ENCODE measurements at regions of chr17 and their contacts with region 1.

Region 1: GRCh38 chr17:1122533-1123392 is 57.0 kb downstream of the ABR start:
- DNase-seq: peak; percentile 69 to 91 (median 83)
- ATAC-seq: peak; percentile 95
- H3K4me3 ChIP-seq: no peak overlapping the region
- H3K4me3 Mint-ChIP-seq: no peak overlapping the region
- H3K27ac ChIP-seq: no peak overlapping the region
- H3K27ac Mint-ChIP-seq: no peak overlapping the region
- H3K4me1 ChIP-seq: peaks cover 12% of the 10 kb centered on the region
- H3K4me1 Mint-ChIP-seq: peaks cover 7% of the 10 kb centered on the region
- H3K27me3 ChIP-seq: no peaks in the 10 kb centered on the region
- H3K27me3 Mint-ChIP-seq: no peaks in the 10 kb centered on the region
- CTCF ChIP-seq: peak; percentile 96

Region 2: GRCh38 chr17:1108861-1109605 is 13.7 kb before region 1 on chr17:
- CTCF ChIA-PET with region 1: interaction called, 18 read pairs
- POLR2A ChIA-PET with region 1: interaction called, 3 read pairs
- intact Hi-C with region 1: no loop called
- DNase-seq: peak; percentile 34 to 87 (median 69)
- ATAC-seq: peak; percentile 82
- H3K4me3 ChIP-seq: peak overlapping the region; percentile 68 to 70
- H3K4me3 Mint-ChIP-seq: peak overlapping the region; percentile 84
- H3K27ac ChIP-seq: peak overlapping the region; percentile 60 to 71
- H3K27ac Mint-ChIP-seq: peak overlapping the region; percentile 82
- H3K4me1 ChIP-seq: peaks cover 24% of the 10 kb centered on the region
- H3K4me1 Mint-ChIP-seq: peaks cover 26% of the 10 kb centered on the region
- H3K27me3 ChIP-seq: no peaks in the 10 kb centered on the region
- H3K27me3 Mint-ChIP-seq: no peaks in the 10 kb centered on the region
- CTCF ChIP-seq: no peak

Region 3: DNA sequence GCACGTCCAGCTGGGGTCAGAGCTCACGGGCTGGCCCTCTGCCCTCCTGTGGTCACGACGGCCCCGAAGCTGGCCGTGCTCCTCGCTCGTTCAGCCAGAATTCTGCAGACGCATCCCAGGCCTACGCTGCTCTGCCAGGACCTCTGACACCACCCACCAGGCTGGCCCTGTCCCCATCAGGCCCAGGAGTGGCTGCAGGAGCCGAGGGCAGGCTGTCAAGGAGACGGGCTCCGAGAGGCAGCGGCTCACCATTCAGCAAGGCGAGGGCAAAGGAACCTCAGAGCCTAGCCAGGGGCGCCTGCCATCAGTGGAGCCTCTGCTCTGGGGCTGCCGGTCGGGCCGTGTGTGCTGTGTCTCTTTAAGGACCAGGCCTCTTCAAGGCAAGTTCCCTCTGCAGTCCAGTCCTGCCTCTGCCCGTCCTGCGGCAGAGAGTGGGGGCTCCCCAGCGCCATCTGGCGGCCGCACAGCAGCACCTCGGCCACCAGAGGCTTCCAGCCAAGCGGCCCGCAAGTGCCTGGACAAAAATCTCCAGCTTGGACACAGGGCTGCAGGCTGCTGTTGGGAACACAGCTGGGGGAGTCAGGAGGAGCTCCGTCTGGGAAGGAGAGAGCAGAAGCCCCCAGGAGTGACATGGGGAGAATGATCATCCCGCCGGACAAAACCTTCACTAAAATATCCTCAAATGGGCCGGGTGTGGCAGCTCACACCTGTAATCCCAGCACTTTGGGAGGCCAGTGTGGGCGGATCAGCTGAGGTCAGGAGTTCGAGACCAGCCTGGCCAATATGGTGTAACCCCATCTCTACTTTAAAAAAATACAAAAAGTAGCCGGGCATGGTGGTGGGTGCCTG is 64.4 kb after region 1 on chr17:
- CTCF ChIA-PET with region 1: interaction called, 137 read pairs
- POLR2A ChIA-PET with region 1: no interaction called
- intact Hi-C with region 1: loop called in 1 of 2 experiments (anchors 1 kb)
- DNase-seq: peak; percentile 54 to 85 (median 71)
- ATAC-seq: peak; percentile 97
- H3K4me3 ChIP-seq: no peak overlapping the region
- H3K4me3 Mint-ChIP-seq: no peak overlapping the region
- H3K27ac ChIP-seq: no peak overlapping the region
- H3K27ac Mint-ChIP-seq: no peak overlapping the region
- H3K4me1 ChIP-seq: no peaks in the 10 kb centered on the region
- H3K4me1 Mint-ChIP-seq: peaks cover 9% of the 10 kb centered on the region
- H3K27me3 ChIP-seq: no peaks in the 10 kb centered on the region
- H3K27me3 Mint-ChIP-seq: no peaks in the 10 kb centered on the region
- CTCF ChIP-seq: peak; percentile 78

Region 4: GRCh38 chr17:1267471-1267947 is 144.7 kb after region 1 on chr17:
- CTCF ChIA-PET with region 1: interaction called, 5 read pairs
- POLR2A ChIA-PET with region 1: no interaction called
- intact Hi-C with region 1: loop called in 1 of 2 experiments (anchors 5 kb)
- DNase-seq: no peak
- ATAC-seq: no peak
- H3K4me3 ChIP-seq: peak overlapping the region; percentile 48 to 64
- H3K4me3 Mint-ChIP-seq: peak overlapping the region; percentile 74
- H3K27ac ChIP-seq: peak overlapping the region in 1 of 2 experiments; percentile 63
- H3K27ac Mint-ChIP-seq: no peak overlapping the region
- H3K4me1 ChIP-seq: peaks cover 7% of the 10 kb centered on the region
- H3K4me1 Mint-ChIP-seq: peaks cover 11% of the 10 kb centered on the region
- H3K27me3 ChIP-seq: peaks cover 7 to 11% of the 10 kb centered on the region in 2 experiments
- H3K27me3 Mint-ChIP-seq: peaks cover 10% of the 10 kb centered on the region
- CTCF ChIP-seq: no peak

Region 5: GRCh38 chr17:1331708-1332107 is 208.9 kb after region 1 on chr17:
- CTCF ChIA-PET with region 1: interaction called, 6 read pairs
- POLR2A ChIA-PET with region 1: interaction called, 4 read pairs
- intact Hi-C with region 1: loop called in 1 of 2 experiments (anchors 1 kb)
- DNase-seq: peak in 3 of 9 experiments; percentile 15 to 42 (median 27)
- ATAC-seq: peak; percentile 81
- H3K4me3 ChIP-seq: no peak overlapping the region
- H3K4me3 Mint-ChIP-seq: no peak overlapping the region
- H3K27ac ChIP-seq: no peak overlapping the region
- H3K27ac Mint-ChIP-seq: peak overlapping the region; percentile 5
- H3K4me1 ChIP-seq: peaks cover 5% of the 10 kb centered on the region
- H3K4me1 Mint-ChIP-seq: peaks cover 11% of the 10 kb centered on the region
- H3K27me3 ChIP-seq: no peaks in the 10 kb centered on the region
- H3K27me3 Mint-ChIP-seq: no peaks in the 10 kb centered on the region
- CTCF ChIP-seq: no peak

Measured in CD8-positive, alpha-beta T cell (primary cell).